ENCODE measurements at regions of chr1 and their contacts with region 1.

Region 1: GRCh38 chr1:98661544-98662268 is at the start of gene SNX7:
- DNase-seq: peak; percentile 83
- H3K4me3 ChIP-seq: peak within 1 kb of the TSS; percentile 70 to 94 (median 91)
- H3K27ac ChIP-seq: peak within 1 kb of the TSS; percentile 56
- H3K4me1 ChIP-seq: peaks cover 23% of the 10 kb centered on the region
- H3K27me3 ChIP-seq: no peaks in the 10 kb centered on the region
- CTCF ChIP-seq: peak in 1 of 2 donors; percentile 43
- POLR2A ChIP-seq: no peak
- total RNA-seq, gene SNX7: 36.0 and 37.9 TPM in 2 replicates

Region 2: DNA sequence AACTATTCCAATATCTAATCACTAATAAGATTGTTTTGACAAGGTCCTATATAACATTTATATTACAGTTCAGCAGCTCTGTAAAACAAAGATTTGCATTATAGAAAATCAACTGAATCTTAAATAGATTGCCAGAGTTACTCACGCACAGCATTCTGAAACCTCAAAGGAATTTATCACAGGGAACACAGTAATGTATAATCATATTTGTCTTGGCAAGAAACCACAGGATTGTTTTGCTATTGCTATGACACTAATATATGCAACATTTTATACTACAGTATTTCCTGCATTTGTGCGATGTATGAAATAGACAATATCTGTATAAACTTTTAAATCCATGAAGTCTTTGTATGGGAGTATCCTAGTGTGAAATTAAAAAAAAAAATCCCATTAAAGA is 241.6 kb after region 1 on chr1:
- CTCF ChIA-PET with region 1: no interaction called
- POLR2A ChIA-PET with region 1: no interaction called
- dilution Hi-C with region 1: no loop called
- intact Hi-C with region 1: loop called (anchors 10 kb)
- DNase-seq: peak; percentile 91
- H3K4me3 ChIP-seq: no peak overlapping the region
- H3K27ac ChIP-seq: peak overlapping the region; percentile 85
- H3K4me1 ChIP-seq: peaks cover 49% of the 10 kb centered on the region
- H3K27me3 ChIP-seq: no peaks in the 10 kb centered on the region
- CTCF ChIP-seq: no peak
- POLR2A ChIP-seq: no peak

Measured in endothelial cell of umbilical vein (primary cell).